ENCODE measurements at regions of chr16 and their contacts with region 1.

Region 1: GRCh38 chr16:67883872-67884261 is 818 bp upstream of the NRN1L start:
- DNase-seq: no peak
- ATAC-seq: peak; percentile 93
- H3K4me3 ChIP-seq: no peak overlapping the region
- H3K27ac ChIP-seq: no peak overlapping the region
- H3K4me1 ChIP-seq: no peaks in the 10 kb centered on the region
- H3K27me3 ChIP-seq: no peaks in the 10 kb centered on the region
- CTCF ChIP-seq: peak; percentile 86 to 92 (median 90)
- EP300 ChIP-seq: no peak
- POLR2A ChIP-seq: no peak
- RAD21 ChIP-seq: peak; percentile 70

Region 2: DNA sequence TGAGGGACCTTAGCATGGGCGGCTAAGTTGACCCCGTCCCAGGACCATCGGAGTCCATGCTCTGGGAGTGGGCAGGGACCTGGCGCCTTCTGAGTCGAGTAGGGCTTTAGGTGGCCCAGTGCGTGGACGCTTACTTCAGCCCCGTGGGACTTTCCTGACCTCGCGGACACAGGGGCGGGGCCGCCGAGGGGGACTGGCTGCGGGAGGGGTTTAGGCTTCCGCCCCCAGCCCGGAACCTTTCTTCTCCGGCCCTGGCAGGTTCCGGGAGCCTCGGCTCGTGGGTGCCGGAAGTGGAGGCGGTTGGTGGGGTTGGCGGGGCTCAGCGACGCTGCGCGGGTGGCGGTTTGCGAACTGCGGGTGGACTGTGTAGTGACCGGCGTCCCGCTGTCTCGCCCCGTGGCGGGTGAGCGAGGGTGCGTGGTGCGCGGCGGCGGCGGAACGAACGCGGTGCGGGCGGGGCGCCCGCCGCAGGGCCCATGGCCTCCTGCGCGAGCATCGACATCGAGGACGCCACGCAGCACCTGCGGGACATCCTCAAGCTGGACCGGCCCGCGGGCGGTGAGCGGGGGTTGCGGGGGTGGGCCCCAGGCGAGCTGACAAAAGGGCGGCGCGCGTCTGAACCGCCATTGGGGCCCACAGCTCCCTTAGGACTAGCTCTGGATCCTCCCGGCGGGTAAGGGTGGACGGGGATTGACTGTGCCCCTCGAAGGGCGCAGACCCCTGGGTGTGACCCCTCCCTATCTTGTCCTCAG is 10.9 kb before region 1 on chr16 and contains the start of gene EDC4:
- CTCF ChIA-PET with region 1: interaction called, 39 read pairs
- POLR2A ChIA-PET with region 1: no interaction called
- RAD21 ChIA-PET with region 1: interaction called, 3 read pairs
- SMC1A ChIA-PET with region 1: no interaction called
- in situ Hi-C with region 1: no loop called
- intact Hi-C with region 1: no loop called
- DNase-seq: peak; percentile 48
- ATAC-seq: peak; percentile 97
- H3K4me3 ChIP-seq: peak within 1 kb of the TSS; percentile 92
- H3K27ac ChIP-seq: peak within 1 kb of the TSS; percentile 78
- H3K4me1 ChIP-seq: peaks cover 10% of the 10 kb centered on the region
- H3K27me3 ChIP-seq: no peaks in the 10 kb centered on the region
- CTCF ChIP-seq: no peak
- EP300 ChIP-seq: no peak
- POLR2A ChIP-seq: peak; percentile 96
- RAD21 ChIP-seq: peak; percentile 11; the same call in 1 of the 2 replicates
- polyA plus RNA-seq, gene EDC4: 1.2 to 2.2 TPM

Measured in GM12878 (cell line).